MCF 10A (cell line): ENCODE measurements at regions of chr10 and their contacts with region 1.

Region 1: DNA sequence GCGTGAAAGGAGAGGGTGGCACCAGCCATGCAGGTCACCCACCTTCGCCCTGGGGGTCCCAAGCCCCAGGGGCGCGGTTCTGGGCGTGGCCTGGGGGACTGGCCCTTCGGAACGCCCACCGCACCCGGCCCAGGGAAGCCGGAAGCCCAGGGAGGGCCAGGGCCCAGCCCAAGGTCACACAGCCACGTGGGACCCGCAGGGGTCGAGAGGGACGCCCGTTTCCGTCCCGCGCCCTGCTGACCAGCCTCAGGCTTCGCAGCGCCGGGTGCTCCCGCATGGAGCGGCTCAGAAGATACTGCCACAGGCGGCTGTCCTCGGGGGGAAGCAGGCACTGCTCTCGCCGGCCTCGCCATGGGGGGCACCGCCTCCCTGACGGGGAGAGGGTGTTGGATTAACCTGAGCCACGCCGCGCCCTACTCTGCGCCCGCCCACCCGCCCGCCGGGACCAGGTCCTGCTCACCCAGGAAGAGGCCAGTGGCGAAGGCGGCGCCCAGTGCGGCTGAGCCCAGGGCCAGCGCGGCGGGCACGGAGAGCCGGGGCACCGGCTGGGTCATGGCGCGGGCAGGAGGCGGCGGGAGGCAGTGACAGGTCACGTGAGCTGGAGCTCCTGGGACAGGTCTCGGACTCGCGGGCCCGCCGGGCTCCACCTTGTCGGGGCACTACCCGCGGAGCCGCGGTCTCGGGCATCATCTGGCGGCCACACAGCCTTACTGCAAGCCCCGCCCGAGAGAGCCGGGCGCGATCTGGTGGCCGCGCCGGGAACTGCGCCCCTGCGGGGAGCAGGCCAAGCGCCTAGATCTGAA is at the start of gene COMTD1:
- DNase-seq: peak; percentile 92
- H3K4me3 Mint-ChIP-seq: peak within 1 kb of the TSS; percentile 76
- H3K27ac Mint-ChIP-seq: no peak within 1 kb of the TSS
- H3K4me1 Mint-ChIP-seq: peaks cover 24% of the 10 kb centered on the region
- H3K27me3 Mint-ChIP-seq: no peaks in the 10 kb centered on the region
- CTCF ChIP-seq: peak; percentile 100
- total RNA-seq, gene COMTD1: 18.3 and 34.3 TPM in 2 replicates

Region 2: GRCh38 chr10:74244097-74244685 is 991.4 kb before region 1 on chr10:
- CTCF ChIA-PET with region 1: interaction called, 8 read pairs
- POLR2A ChIA-PET with region 1: no interaction called
- intact Hi-C with region 1: loop called (anchors 2 kb)
- DNase-seq: peak; percentile 56
- H3K4me3 Mint-ChIP-seq: no peak overlapping the region
- H3K27ac Mint-ChIP-seq: no peak overlapping the region
- H3K4me1 Mint-ChIP-seq: no peaks in the 10 kb centered on the region
- H3K27me3 Mint-ChIP-seq: no peaks in the 10 kb centered on the region
- CTCF ChIP-seq: peak; percentile 32

Region 3: DNA sequence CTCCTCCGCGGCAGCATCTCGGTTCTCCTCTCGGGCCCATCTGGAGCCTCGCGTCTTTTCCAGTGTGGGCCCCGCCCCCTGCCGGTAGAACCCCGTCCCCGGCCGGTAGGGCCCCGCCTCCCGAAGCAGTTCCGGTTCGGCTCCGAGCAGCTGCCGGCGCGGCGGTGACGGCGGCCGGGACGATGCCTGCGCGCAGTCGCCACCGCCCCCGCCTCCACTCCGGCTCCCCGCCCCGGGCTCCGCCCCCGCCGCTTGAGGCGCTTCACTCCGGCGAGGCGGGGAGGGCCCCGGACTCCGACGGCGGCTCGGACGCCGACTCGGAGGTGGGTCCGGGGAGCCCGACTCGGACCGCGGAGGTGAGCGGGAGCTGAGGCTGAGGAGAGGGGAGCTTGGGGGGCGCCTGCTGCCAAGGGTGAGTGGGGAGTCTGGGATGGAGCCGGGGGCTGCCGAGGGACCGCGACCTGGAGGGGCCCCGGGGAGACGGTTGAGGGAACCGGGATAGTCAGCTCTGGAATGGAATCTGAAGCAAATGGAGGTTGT is 124.1 kb before region 1 on chr10 and contains the start of gene SAMD8:
- CTCF ChIA-PET with region 1: interaction called, 28 read pairs
- POLR2A ChIA-PET with region 1: interaction called, 27 read pairs
- intact Hi-C with region 1: loop called (anchors 1 kb)
- DNase-seq: peak; percentile 95
- H3K4me3 Mint-ChIP-seq: peak within 1 kb of the TSS; percentile 95
- H3K27ac Mint-ChIP-seq: peak within 1 kb of the TSS; percentile 95
- H3K4me1 Mint-ChIP-seq: peaks cover 23% of the 10 kb centered on the region
- H3K27me3 Mint-ChIP-seq: no peaks in the 10 kb centered on the region
- CTCF ChIP-seq: no peak
- total RNA-seq, gene SAMD8: 28.1 and 33.9 TPM in 2 replicates

Region 4: GRCh38 chr10:75187961-75188426 is 47.6 kb before region 1 on chr10:
- CTCF ChIA-PET with region 1: interaction called, 209 read pairs
- POLR2A ChIA-PET with region 1: interaction called, 118 read pairs
- intact Hi-C with region 1: loop called (anchors 1 kb)
- DNase-seq: peak; percentile 78
- H3K4me3 Mint-ChIP-seq: no peak overlapping the region
- H3K27ac Mint-ChIP-seq: no peak overlapping the region
- H3K4me1 Mint-ChIP-seq: peaks cover 22% of the 10 kb centered on the region
- H3K27me3 Mint-ChIP-seq: no peaks in the 10 kb centered on the region
- CTCF ChIP-seq: peak; percentile 83

Region 5: DNA sequence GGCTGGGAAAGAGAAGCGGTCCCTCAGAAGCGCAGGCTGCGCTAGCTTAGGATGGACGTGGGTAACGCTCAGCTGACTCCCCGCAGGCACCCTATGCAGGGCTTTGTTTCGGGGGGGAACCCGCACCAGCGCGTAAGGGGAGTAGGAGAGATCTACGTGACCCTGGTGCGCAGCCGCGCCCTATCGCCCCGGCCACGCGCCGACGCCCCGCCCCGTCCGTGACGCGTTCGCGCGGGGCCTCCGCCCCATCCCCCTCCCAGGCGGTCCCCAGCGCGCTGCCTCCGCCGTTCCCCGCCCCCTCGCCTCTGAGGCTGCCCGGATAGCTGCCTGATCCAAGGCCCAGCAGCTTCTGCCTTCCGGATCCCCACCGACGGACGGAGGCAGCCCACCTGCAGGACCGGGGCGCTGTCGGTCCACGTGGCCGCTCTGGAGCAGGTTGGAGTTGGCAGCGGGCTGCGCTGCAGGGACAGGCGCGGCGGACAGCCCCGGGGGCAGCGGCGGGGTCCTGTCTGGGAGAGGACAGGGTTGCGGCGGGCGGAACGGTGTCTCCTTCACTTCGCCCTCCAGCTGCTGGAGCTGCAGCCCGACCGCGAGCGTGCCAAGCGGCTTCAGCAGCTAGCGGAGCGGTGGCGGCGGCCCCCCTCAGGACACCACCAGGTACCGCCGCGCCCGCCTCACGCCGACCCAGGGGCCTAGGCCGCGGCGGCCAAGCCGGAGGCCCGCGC is 25.1 kb before region 1 on chr10 and contains the start of gene VDAC2:
- CTCF ChIA-PET with region 1: interaction called, 27 read pairs
- POLR2A ChIA-PET with region 1: interaction called, 615 read pairs
- intact Hi-C with region 1: loop called (anchors 1 kb)
- DNase-seq: peak; percentile 84
- H3K4me3 Mint-ChIP-seq: peak within 1 kb of the TSS; percentile 79
- H3K27ac Mint-ChIP-seq: peak within 1 kb of the TSS; percentile 92
- H3K4me1 Mint-ChIP-seq: peaks cover 21% of the 10 kb centered on the region
- H3K27me3 Mint-ChIP-seq: no peaks in the 10 kb centered on the region
- CTCF ChIP-seq: no peak
- total RNA-seq, gene VDAC2: 303 and 310 TPM in 2 replicates